Lower lobe of right lung (tissue), 2 donors: ENCODE measurements at regions of chr5 and their contacts with region 1.

Region 1: DNA sequence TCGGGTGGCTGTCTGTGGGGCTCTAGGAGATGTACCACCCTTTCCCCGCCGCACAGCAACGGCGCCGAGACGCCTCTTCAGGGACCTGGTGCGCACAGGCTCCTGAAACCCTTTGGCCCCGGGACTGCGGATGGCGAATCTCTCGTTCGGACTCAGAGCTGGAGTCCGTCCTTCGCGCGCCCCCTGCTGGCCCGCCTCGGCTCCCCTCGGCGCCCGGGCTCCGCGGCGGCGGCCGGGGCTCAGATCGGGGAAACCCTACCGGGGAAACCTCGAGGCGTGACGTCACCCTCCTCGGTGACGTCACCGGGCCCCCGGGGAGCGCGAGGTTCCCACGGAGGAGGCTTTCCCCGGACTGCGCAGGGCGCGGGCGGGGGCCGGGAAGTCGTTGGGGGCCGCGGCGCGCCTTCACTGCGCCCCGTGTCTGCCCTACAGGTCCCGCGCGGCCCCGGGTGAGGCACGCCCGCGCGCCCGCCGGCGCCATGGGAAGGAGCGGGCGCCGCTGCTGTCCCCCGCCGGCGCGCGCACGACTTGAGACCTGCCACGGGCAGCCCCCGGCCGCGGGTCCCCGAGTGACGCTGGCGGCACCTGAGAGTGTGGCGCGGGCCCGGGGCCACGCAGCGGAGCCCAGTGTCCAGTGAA is 7.9 kb downstream of the PRR7 start:
- DNase-seq: peak; percentile 94
- ATAC-seq: peak; percentile 83 to 86
- H3K4me3 ChIP-seq: peak overlapping the region; percentile 79
- H3K27ac ChIP-seq: peak overlapping the region; percentile 76
- H3K4me1 ChIP-seq: peaks cover 29% of the 10 kb centered on the region
- H3K27me3 ChIP-seq: peaks cover 22% of the 10 kb centered on the region
- CTCF ChIP-seq: peak; percentile 94

Region 2: GRCh38 chr5:177403792-177404640 is 50.5 kb before region 1 on chr5:
- intact Hi-C with region 1: loop called (anchors 10 kb)
- DNase-seq: peak; percentile 94
- ATAC-seq: peak; percentile 94
- H3K4me3 ChIP-seq: peak overlapping the region; percentile 70
- H3K27ac ChIP-seq: no peak overlapping the region
- H3K4me1 ChIP-seq: peaks cover 49% of the 10 kb centered on the region
- H3K27me3 ChIP-seq: peaks cover 50% of the 10 kb centered on the region
- CTCF ChIP-seq: peak; percentile 83

Region 3: DNA sequence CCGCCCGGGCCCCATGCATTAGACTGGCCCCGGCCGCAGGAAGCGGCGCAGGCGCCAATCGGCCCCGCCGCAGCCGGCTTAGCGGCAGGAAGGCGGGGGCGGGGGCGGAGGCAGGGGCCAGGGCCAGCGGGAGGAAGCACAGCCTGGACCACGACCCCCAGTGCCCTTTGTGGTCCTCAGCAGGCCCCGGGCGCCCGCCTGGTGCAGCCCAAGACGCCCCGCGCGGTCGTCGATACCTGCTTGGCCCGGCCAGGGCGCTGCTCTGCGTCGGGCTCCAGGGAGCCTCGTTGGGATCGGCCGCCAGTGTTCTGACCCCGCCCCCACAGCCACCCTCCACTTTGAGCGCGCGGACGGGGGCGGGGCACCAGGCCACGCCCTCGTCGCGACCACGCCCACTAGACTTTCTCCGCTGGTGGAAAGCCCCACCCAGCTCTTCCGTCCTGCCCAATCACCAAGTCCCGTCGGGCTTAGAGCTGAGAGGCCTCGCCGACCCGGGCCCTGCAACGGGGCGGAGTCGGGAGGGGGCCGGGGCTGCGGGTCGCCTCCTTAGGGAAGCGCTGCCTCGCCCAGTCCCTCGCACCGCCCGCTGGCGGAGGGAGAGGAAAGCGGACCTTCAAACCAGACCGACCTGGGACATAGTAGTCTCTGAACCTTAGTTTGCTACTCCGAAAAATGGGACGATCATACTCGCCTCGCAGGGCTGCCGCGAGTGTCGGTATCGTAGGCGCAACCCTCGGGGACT is 42.9 kb after region 1 on chr5 and contains the start of gene PDLIM7:
- intact Hi-C with region 1: no loop called
- DNase-seq: peak; percentile 96
- ATAC-seq: peak; percentile 94 to 95
- H3K4me3 ChIP-seq: peak within 1 kb of the TSS; percentile 71
- H3K27ac ChIP-seq: peak within 1 kb of the TSS; percentile 87
- H3K4me1 ChIP-seq: peaks cover 60% of the 10 kb centered on the region
- H3K27me3 ChIP-seq: no peaks in the 10 kb centered on the region
- CTCF ChIP-seq: no peak
- total RNA-seq, gene PDLIM7: 47.1 TPM